ENCODE measurements at regions of chr12 and their contacts with region 1.

Region 1: GRCh38 chr12:70733385-70733784 is 96.2 kb upstream of the PTPRB start:
- DNase-seq: peak in 2 of 4 donors; percentile 14 to 27
- ATAC-seq: peak; percentile 63
- H3K4me3 ChIP-seq: no peak overlapping the region
- H3K27ac ChIP-seq: no peak overlapping the region
- H3K4me1 ChIP-seq: no peaks in the 10 kb centered on the region
- H3K27me3 ChIP-seq: no peaks in the 10 kb centered on the region
- CTCF ChIP-seq: peak in 6 of 7 experiments; percentile 45 to 77 (median 70)
- POLR2A ChIP-seq: no peak

Region 2: GRCh38 chr12:69900720-69901131 is 832.7 kb before region 1 on chr12:
- intact Hi-C with region 1: loop called (anchors 10 kb)
- DNase-seq: peak; percentile 78 to 87 (median 81)
- ATAC-seq: peak; percentile 80
- H3K4me3 ChIP-seq: no peak overlapping the region
- H3K27ac ChIP-seq: no peak overlapping the region
- H3K4me1 ChIP-seq: peaks cover 2% of the 10 kb centered on the region
- H3K27me3 ChIP-seq: no peaks in the 10 kb centered on the region
- CTCF ChIP-seq: peak; percentile 56 to 88 (median 78)
- POLR2A ChIP-seq: no peak

Region 3: GRCh38 chr12:70660620-70661219 is 72.7 kb before region 1 on chr12:
- intact Hi-C with region 1: no loop called
- DNase-seq: peak in 1 of 4 donors; percentile 9
- ATAC-seq: peak; percentile 35
- H3K4me3 ChIP-seq: no peak overlapping the region
- H3K27ac ChIP-seq: no peak overlapping the region
- H3K4me1 ChIP-seq: no peaks in the 10 kb centered on the region
- H3K27me3 ChIP-seq: no peaks in the 10 kb centered on the region
- CTCF ChIP-seq: no peak
- POLR2A ChIP-seq: no peak

Region 4: DNA sequence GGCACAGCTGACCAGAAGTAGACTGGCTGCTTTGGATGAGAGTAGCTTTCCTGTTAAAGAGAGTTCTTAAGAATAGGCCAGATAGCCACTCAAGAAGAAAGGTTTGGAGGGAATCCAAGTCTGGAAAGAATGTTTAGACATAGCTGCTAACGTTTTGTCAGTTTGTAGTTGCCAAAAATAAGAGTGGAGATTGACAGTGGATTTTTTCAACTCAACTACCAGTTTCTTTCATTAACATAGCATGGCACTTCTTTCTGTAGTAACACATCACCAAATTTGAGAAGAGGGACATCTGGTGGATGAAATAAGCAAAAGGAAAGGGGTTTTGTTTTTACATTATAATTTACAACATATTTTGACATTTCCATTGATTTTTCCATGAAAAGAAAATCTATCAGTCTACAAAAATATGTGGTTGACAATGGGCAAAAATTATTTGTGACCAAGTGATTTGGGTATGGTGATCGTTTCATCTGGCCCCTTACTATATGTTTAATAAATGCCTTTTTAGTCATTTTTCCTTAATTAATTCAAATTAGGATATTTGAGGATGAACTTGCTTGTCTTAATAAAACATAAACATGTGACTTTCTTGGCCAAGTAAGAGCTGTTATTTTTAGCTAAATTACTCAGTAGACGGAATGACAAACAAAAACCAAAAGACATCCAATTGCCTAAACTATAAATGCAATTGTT is 116.0 kb after region 1 on chr12:
- intact Hi-C with region 1: loop called (anchors 10 kb)
- DNase-seq: no peak
- ATAC-seq: peak; percentile 42
- H3K4me3 ChIP-seq: no peak overlapping the region
- H3K27ac ChIP-seq: no peak overlapping the region
- H3K4me1 ChIP-seq: no peaks in the 10 kb centered on the region
- H3K27me3 ChIP-seq: no peaks in the 10 kb centered on the region
- CTCF ChIP-seq: peak in 3 of 7 experiments; percentile 29 to 48 (median 45)
- POLR2A ChIP-seq: no peak

Region 5: DNA sequence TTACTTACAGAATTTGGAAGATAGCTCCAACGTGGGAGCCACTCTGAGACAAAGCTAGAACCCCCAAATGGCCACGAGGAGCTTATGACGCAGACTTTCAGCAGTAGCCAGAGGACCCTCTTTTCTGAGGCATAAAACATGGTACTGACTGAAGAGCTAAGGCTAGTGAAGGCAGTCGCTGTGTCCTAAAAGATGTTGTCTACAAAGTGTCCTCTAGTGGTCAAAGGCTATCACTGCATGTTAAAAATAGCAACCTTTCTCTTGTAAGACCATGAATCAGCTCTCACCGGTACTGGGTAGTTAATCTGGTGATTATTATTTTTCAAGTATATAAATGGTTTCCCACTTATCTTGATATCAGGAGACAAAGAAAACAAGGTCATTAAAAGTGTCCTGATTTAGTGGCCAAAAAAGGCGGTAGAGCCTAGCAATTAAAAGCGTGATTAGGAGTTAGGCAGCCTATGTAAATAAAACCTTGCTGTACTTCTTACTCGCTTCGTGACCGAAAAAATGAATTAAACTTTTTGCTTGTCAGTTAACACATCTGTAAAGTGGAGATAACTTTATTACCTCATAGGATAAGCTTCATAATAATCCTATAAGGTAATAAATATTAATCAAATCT is 659.2 kb after region 1 on chr12:
- intact Hi-C with region 1: loop called (anchors 10 kb)
- DNase-seq: peak in 3 of 4 donors; percentile 14 to 41 (median 20)
- ATAC-seq: peak; percentile 79
- H3K4me3 ChIP-seq: no peak overlapping the region
- H3K27ac ChIP-seq: no peak overlapping the region
- H3K4me1 ChIP-seq: peaks cover 3% of the 10 kb centered on the region
- H3K27me3 ChIP-seq: no peaks in the 10 kb centered on the region
- CTCF ChIP-seq: peak; percentile 57 to 88 (median 84)
- POLR2A ChIP-seq: no peak